Head of caudate nucleus (tissue), 42 donors: ENCODE measurements at regions of chr7 and their contacts with region 1.

Region 1: DNA sequence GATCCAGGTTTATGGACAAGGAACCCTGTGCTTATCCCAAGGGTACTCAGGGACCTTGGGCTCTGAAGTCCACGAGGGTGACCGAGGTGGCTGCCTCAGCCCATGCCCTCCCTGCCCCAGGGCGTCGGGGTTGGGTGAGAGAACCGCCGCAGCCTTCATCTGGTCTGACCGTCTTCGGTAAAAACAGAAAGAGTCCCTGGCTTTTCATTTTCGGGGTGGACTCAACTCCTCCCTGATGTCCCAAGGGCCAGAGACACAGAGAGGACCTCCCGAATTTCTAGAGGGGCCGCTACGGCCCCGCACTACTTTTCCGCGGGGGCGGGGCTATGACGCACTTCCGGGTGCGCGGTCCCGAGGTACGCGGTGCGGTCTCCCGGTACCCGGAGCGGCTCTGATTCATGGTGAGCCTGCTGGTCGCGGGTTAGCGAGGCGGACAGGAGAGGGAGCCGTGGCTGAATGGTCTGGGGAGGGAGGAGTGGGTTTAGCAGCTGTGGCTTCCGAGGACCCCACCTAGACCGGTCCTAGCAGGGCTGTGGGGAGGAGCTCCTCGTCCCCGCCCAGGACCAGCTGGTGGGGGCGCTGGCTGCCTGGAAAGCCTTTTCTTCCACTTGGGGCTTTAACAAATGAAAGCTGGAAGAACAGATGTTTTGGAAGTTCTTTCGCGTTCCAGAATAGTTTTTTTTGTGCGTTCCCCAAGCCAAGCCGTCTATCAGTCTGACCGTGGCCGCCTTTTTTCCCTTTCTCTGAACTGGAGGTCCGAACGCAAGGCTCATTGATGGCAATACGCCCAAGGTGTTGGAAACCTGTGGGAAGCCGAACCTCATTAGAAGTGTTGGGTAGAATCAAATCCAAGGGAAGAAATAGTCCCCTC is at the start of gene ZSCAN21:
- DNase-seq: peak; percentile 69 to 94 (median 89)

Region 2: GRCh38 chr7:99918959-99919813 is 130.5 kb before region 1 on chr7 and contains the start of gene TRIM4:
- intact Hi-C with region 1: loop called (anchors 10 kb)
- DNase-seq: peak; percentile 87 to 97 (median 92)

Region 3: GRCh38 chr7:99990460-99990852 is 59.2 kb before region 1 on chr7:
- intact Hi-C with region 1: loop called (anchors 5 kb)
- DNase-seq: peak in 13 of 42 donors; percentile 12 to 49 (median 28)